ENCODE measurements at regions of chr1 and their contacts with region 1.

Region 1: DNA sequence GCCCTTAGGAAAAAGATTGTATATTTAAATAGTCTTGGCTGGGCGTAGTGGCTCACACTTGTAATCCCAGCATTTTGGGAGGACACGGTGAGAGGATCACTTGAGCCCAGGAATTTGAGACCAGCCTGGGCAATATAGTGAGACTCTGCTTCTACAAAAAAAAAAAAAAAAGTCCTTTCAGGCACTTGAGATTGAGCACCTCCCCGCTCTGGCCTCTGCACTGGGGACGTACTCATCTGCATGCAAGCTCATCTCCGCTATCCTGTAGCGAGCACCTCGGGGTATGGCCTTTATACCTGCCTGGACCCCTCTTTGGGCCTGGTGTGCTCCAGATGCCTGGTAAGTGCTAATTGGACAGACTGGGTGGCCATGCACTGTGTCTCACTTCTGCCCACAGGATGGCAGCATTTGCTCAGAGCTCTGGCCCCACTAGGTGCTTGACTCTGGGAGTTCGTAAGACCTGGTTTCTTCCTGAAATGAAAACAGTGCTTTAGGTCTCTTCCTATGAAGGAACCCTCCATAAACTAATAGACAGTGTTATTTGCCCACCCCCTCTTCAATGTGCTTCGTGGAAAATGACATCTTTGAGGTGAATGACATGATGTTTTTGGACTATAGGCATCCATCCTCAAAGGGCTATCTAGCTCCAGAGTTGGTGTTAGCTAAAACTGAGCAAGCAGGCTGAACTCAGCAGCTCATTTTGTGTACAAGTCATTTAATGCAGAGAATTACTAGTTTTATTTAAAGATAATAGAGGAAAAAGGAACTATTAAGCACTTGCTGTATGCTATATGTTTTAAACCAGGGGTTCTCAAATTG is 61.7 kb upstream of the ADAR start:
- DNase-seq: peak; percentile 62 to 70
- H3K4me3 ChIP-seq: no peak overlapping the region
- H3K27ac ChIP-seq: no peak overlapping the region
- H3K4me1 ChIP-seq: no peaks in the 10 kb centered on the region
- H3K27me3 ChIP-seq: peaks cover 9% of the 10 kb centered on the region; the same call in 1 of the 2 replicates
- CTCF ChIP-seq: peak; percentile 84

Region 2: DNA sequence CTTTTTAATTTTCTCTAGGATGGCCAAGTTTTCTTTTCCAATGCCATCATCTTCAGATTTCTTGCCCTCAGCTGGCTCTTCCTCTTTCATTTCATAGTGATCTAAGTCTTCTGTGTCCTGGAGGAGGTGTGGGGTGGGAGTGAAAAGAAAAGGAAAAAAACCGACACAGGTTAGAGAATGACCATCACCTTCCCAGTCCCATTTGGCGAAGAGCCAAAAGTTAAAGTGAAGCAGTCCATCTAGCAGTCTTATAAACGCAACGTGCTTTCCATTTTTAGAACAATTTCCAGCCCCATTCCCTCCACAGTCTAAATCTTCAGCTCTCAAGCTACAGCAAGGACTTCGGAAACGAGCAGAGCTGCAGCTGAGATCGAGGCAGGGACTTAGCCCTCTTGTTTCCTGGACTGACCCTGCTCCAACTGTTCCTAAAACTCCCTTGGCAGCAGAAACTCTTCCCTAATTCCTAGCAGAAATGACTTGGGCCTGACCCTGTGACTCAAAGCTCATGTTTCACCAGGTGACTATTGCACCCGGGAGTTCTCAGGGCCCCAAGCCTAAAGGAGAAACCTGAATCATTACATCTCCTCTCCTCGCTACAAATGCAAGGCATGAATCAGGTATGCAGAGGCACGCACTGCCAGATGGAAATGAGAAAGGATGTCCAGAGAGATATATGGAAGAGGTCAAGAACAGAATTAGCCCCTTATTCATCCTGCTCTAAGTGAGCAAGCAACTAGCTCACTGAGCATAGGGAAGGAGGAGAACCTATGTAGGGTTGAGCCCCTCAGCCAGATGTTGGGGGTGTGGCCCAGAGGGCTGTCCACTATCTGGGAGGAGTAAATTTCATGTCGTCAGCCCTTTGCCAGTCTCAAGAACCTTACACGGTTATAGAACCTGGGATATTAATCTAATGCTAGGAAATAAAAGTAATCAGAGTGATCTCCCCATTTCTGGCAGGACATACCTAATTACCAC is 116.3 kb before region 1 on chr1:
- CTCF ChIA-PET with region 1: no interaction called
- POLR2A ChIA-PET with region 1: no interaction called
- intact Hi-C with region 1: no loop called
- DNase-seq: no peak
- H3K4me3 ChIP-seq: no peak overlapping the region
- H3K27ac ChIP-seq: no peak overlapping the region
- H3K4me1 ChIP-seq: peaks cover 12% of the 10 kb centered on the region; the same call in 1 of the 2 replicates
- H3K27me3 ChIP-seq: no peaks in the 10 kb centered on the region
- CTCF ChIP-seq: no peak

Region 3: DNA sequence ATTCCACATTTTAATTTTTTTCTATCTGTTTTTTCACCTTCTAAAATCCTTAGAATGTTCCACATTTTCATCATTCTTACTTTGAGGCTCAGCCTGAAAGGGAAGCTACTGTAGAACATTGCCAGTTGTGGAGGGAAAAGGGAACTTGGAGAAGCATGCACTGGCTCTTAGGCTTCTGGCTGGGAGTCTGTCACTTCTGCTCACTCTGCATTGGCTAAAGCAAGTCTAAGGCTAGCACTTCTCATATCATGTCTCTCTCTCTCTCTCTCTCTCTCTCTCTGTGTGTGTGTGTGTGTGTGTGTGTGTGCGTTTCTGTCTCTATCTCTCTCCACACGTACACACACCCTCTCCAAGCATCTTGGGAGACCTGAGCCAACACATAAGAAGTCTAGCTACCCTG is 12.1 kb before region 1 on chr1:
- CTCF ChIA-PET with region 1: no interaction called
- POLR2A ChIA-PET with region 1: no interaction called
- intact Hi-C with region 1: no loop called
- DNase-seq: no peak
- H3K4me3 ChIP-seq: no peak overlapping the region
- H3K27ac ChIP-seq: no peak overlapping the region
- H3K4me1 ChIP-seq: no peaks in the 10 kb centered on the region
- H3K27me3 ChIP-seq: peaks cover 68% of the 10 kb centered on the region; the same call in 1 of the 2 replicates
- CTCF ChIP-seq: no peak

Region 4: GRCh38 chr1:154802982-154803920 is 133.6 kb after region 1 on chr1:
- CTCF ChIA-PET with region 1: no interaction called
- POLR2A ChIA-PET with region 1: no interaction called
- intact Hi-C with region 1: no loop called
- DNase-seq: no peak
- H3K4me3 ChIP-seq: no peak overlapping the region
- H3K27ac ChIP-seq: no peak overlapping the region
- H3K4me1 ChIP-seq: no peaks in the 10 kb centered on the region
- H3K27me3 ChIP-seq: peaks cover 97% of the 10 kb centered on the region
- CTCF ChIP-seq: no peak

Region 5: DNA sequence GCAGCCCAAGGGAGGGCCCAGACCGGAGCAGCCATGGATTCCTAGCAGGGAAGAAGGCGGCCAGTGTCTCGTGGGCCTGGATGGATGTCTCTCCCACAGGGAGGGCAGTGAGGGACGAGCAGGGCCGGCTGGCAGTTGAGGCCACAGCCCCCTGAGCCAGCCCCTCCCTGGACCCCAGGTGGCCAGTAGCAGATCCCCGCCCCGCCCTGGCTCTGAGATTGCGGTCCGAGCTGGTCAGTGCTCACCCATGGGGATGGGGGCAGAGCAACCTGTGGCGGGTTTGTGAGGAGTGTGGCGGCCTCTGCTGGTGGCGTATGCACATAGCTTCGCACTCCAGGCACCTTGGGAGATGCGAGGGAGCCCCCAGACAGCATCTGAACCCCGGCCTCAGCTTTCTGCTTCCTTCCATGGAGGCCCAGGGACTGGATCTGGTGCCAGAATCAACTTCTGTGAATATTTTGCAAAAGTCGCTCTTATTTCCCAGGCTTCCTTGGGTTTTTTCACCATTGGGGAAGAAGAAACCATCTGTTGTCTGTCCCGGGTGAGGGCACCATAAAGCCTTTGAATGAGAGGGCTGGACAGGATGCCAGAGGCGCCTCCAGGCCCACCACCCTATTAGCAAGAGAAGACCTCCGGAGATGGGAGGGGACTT is 208.8 kb after region 1 on chr1:
- CTCF ChIA-PET with region 1: interaction called, 6 read pairs
- POLR2A ChIA-PET with region 1: no interaction called
- intact Hi-C with region 1: loop called (anchors 1 kb)
- DNase-seq: peak in 1 of 2 experiments; percentile 75
- H3K4me3 ChIP-seq: no peak overlapping the region
- H3K27ac ChIP-seq: no peak overlapping the region
- H3K4me1 ChIP-seq: peaks cover 13% of the 10 kb centered on the region
- H3K27me3 ChIP-seq: peaks cover 59% of the 10 kb centered on the region; the same call in 1 of the 2 replicates
- CTCF ChIP-seq: peak; percentile 89

Region 6: DNA sequence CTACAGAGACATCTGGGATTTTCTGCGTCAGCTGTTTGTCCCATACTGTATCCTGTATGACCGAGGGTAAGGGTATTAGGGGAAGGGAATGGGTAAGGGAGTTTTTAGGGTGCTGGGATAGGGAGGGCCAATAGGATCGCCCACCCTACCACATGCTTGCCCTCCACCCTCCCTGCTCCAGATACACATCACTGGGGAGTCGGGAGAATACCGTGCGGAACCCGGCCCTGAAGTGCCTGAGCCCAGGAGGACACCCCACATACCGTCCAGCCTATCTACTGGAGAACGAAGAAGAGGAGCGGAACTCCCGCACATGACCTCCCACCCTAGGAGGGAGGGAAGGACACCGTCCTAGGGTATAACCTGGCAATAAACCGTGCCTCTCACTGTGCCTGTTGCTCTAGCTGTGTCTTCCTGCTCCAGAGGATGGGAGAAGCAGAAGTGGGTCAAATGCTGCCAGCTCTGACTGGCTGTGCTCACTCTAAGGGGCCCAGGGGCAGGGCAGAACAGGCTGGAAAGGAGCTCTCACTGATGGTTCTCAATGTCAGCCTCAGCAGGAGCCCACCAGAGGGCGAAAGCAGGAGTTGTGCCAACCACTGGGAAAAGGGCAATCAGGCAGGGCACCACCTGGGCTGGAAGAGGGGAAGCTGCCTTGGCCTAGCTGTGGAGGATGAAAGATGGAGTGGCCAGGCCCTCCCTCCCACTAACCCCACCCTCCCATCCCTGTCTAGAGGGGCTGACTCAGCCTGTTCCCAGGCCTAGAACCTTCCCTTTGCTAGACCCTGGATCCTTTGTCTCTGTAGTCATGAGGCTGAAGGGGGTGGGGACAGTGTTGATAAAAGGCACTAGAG is 323.3 kb after region 1 on chr1:
- CTCF ChIA-PET with region 1: no interaction called
- POLR2A ChIA-PET with region 1: no interaction called
- intact Hi-C with region 1: no loop called
- DNase-seq: no peak
- H3K4me3 ChIP-seq: no peak overlapping the region
- H3K27ac ChIP-seq: no peak overlapping the region
- H3K4me1 ChIP-seq: peaks cover 19% of the 10 kb centered on the region
- H3K27me3 ChIP-seq: no peaks in the 10 kb centered on the region
- CTCF ChIP-seq: no peak; the same call in 1 of the 2 replicates

Region 7: GRCh38 chr1:155063550-155064110 is 394.0 kb after region 1 on chr1 and contains the start of gene EFNA4:
- CTCF ChIA-PET with region 1: no interaction called
- POLR2A ChIA-PET with region 1: no interaction called
- intact Hi-C with region 1: loop called (anchors 5 kb)
- DNase-seq: peak; percentile 79 to 82
- H3K4me3 ChIP-seq: peak within 1 kb of the TSS; percentile 74
- H3K27ac ChIP-seq: no peak within 1 kb of the TSS
- H3K4me1 ChIP-seq: peaks cover 10% of the 10 kb centered on the region
- H3K27me3 ChIP-seq: no peaks in the 10 kb centered on the region
- CTCF ChIP-seq: no peak
- total RNA-seq, gene EFNA4: 14.0 and 17.3 TPM in 2 replicates

Measured in PC-9 (cell line).